OCI-LY7 (cell line): ENCODE measurements at regions of chr12 and their contacts with region 1.

Region 1: DNA sequence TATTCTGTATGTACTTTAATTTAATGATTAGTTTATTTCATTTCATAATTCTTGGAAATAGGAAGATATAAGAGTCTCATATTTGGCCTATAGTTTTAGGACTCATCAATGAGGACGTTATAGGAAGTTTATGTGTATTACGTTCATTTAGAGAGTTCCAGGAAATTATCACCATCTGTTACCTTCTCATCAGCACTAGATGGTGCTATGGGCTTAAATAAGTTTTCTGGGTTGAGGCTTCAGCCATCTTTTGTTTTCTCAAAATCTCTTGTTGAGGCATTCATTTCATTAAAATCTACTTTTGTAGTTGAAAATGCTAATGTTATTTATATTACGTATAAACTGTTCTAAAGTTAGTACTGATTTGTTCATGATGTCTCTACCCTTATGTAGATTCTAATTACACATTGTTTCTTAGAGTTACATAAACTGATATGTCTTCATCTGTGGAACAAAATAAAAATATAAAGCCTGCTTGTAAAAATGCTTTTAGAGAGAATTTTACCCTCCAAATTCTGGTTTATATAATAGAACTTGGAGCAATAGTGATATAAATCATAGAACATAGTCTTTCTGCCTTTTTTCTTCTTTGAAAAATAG is 89.2 kb downstream of the CFAP54 start:
- DNase-seq: peak; percentile 73
- H3K4me3 ChIP-seq: no peak overlapping the region
- H3K27ac ChIP-seq: no peak overlapping the region
- H3K4me1 ChIP-seq: peaks cover 5% of the 10 kb centered on the region
- CTCF ChIP-seq: peak; percentile 90

Region 2: DNA sequence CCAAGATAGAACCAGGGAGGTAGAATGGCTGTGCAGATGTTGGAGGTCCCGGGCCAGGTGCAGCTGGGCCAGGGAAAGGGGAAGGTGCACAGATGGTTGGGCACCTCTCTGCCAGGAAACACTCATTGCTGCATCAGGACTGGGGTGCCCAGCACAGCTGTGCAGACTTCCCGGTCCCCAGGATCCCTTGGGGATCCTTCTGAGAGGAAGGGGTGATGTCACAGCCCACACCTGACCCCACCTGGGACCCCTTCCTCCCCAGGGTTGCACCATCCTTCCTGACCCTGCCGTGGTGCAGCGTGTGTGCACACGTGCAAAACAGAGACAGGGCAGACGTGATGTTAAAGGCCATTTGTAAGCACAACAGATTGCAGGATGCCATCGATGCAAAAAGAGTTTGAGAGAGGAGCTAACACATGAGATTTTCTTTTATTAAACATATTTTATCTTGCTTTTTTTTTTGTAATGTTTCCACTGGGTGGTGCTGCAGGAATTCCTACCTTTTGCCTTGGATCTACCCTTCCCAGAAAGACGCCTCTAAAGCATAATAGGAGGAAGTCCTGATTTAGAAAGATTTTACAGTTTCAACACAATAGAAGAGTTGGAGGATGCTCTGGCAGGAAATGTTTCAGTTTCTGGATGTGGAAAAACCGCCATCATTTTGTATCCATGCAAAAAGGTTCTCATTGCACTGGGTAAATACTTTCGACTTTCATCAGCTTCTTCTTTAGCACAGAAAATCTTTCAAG is 369.7 kb before region 1 on chr12:
- CTCF ChIA-PET with region 1: no interaction called
- POLR2A ChIA-PET with region 1: no interaction called
- intact Hi-C with region 1: no loop called
- DNase-seq: peak; percentile 92
- H3K4me3 ChIP-seq: peak overlapping the region; percentile 33
- H3K27ac ChIP-seq: no peak overlapping the region
- H3K4me1 ChIP-seq: peaks cover 68% of the 10 kb centered on the region
- CTCF ChIP-seq: peak; percentile 49

Region 3: DNA sequence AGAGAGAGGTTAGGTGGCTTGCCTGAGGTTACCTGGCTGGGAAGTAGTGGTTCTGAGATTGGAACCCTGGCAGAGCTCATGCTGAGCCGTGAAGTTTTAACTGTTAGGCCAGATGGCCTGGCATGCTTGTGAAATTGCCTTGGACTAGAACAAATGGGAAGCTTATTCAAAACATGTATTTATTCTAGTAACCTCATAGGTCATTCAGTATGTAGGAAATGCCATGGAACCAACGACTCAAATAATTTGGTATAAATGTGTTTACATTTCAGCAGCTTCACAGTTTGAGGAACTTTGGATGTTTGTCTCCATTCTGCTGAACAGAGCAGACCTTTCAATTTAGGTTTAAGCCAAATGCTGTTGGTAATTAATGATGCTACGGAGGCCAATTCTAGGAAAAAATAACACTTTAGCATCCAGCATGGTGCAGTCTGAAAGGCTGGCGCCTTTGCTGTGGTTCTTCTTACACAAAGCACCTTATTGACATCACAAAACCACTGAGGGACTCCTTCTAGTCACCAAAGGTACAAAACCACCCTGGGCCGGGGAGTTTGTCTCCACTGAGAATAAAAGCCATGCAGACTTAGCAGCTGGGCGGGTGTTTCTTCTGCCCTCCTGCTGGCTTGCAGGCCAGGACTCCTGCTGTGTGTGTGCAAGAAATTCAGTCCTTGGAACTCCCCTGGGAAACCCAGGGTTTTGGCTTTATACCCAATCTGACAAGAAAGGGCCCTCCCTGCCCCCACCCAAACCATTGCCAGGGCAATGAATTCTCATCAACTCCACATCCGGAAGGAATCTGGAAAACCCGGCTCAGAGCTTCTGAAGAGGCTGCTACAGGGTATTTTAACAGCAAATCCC is 320.3 kb before region 1 on chr12:
- CTCF ChIA-PET with region 1: no interaction called
- POLR2A ChIA-PET with region 1: no interaction called
- intact Hi-C with region 1: no loop called
- DNase-seq: no peak
- H3K4me3 ChIP-seq: no peak overlapping the region
- H3K27ac ChIP-seq: no peak overlapping the region
- H3K4me1 ChIP-seq: no peaks in the 10 kb centered on the region
- CTCF ChIP-seq: no peak

Region 4: DNA sequence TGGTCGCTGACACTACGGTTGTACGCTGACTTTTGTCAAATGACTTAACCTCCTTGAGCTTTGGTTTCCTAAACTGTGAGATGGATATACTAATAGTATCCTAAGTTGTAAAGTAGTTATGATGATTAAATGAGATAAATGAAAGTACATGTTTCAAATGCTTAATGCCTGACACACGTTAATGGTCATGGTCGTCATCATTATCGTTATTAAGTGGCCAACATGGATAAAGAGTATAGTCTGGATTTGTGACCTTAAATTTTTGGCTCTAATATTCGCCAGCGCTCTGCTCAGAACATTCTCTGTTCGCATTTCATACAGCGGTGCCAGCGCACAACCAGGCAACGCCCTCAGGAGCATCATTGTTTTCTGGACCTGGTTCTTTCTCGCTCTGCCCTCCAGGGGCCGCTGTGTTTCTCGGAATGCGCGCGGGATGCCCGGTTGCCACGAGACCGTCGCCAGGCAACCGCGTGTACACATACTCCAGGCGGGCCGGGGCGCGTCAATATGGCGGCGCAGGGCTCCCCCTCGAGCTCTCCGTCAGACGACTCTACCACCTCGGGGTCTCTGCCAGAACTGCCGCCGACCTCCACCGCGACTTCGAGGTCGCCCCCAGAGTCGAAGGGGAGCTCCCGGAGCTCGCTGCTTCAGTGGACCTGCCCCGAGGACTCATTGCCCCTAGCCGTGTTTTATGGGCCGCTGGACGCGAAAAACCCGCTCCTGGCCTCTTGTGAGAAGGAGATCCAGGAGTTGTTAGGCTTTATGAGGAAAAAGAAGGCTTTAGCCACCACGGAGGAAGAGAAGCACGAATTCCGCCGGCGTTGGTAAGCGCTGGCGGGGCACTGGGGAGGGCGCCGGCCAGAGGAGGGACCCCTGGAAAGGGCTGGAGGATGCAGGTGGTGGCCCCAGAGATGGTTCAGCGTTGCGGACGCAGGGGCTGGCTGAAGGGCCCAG is 89.2 kb before region 1 on chr12 and contains the start of gene CFAP54:
- CTCF ChIA-PET with region 1: no interaction called
- POLR2A ChIA-PET with region 1: no interaction called
- intact Hi-C with region 1: no loop called
- DNase-seq: peak; percentile 91
- H3K4me3 ChIP-seq: peak within 1 kb of the TSS; percentile 70
- H3K27ac ChIP-seq: no peak within 1 kb of the TSS
- H3K4me1 ChIP-seq: peaks cover 17% of the 10 kb centered on the region
- CTCF ChIP-seq: peak; percentile 90
- total RNA-seq, gene CFAP54: not detected in 2 replicates

Region 5: GRCh38 chr12:96985480-96986362 is 407.1 kb after region 1 on chr12:
- CTCF ChIA-PET with region 1: no interaction called
- POLR2A ChIA-PET with region 1: no interaction called
- intact Hi-C with region 1: loop called (anchors 5 kb)
- DNase-seq: peak; percentile 27
- H3K4me3 ChIP-seq: no peak overlapping the region
- H3K27ac ChIP-seq: no peak overlapping the region
- H3K4me1 ChIP-seq: peaks cover 3% of the 10 kb centered on the region
- CTCF ChIP-seq: peak; percentile 82

Region 6: DNA sequence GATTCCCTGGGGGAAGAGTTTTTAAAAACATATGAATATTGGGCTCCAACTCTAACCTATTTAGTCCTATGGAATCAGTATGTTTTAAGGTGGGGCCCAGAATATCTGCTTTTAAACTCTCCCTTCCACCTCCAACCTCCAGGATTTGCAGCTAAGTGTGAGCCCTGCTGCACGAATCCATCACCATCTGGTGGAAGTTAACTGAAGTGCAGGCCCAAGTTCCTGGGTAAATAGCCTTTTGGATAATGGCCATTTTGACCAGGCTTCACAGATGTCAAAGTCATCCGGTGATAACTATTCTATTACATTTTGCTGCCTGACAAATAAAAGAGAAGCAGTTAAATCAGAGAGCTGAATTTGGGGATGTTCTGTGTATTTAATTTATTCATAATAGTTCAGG is 825.9 kb after region 1 on chr12:
- CTCF ChIA-PET with region 1: no interaction called
- POLR2A ChIA-PET with region 1: no interaction called
- intact Hi-C with region 1: loop called (anchors 5 kb)
- DNase-seq: peak; percentile 51
- H3K4me3 ChIP-seq: no peak overlapping the region
- H3K27ac ChIP-seq: no peak overlapping the region
- H3K4me1 ChIP-seq: no peaks in the 10 kb centered on the region
- CTCF ChIP-seq: peak; percentile 87

Region 7: GRCh38 chr12:98397316-98398105 is 1818.9 kb after region 1 on chr12:
- CTCF ChIA-PET with region 1: no interaction called
- POLR2A ChIA-PET with region 1: no interaction called
- intact Hi-C with region 1: loop called (anchors 10 kb)
- DNase-seq: peak; percentile 89
- H3K4me3 ChIP-seq: peak overlapping the region; percentile 62
- H3K27ac ChIP-seq: peak overlapping the region; percentile 31
- H3K4me1 ChIP-seq: peaks cover 50% of the 10 kb centered on the region
- CTCF ChIP-seq: peak; percentile 92